PC-9 (cell line): ENCODE measurements at regions of chrX and their contacts with region 1.

Region 1: DNA sequence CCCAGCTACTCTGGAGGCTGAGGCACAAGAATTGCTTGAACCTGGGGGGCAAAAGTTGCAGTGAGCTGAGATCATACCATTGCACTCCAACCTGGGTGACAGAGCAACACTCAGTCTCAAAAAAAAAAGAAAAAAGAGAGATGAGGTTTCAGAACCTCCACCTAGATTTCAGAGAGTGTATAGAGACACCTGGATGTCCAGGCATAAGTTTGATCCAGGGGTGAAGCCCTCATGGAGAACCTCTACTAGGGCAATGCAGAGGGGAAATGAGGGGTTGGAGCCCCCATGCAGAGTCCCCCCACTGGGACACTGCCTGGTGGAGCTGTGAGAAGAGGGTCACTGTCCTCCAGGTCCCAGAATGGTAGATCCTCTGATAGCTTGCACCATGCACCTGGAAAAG is 92.8 kb upstream of the HSD17B10 start:
- DNase-seq: no peak
- H3K4me3 ChIP-seq: no peak overlapping the region
- H3K27ac ChIP-seq: no peak overlapping the region
- H3K4me1 ChIP-seq: no peaks in the 10 kb centered on the region
- H3K27me3 ChIP-seq: no peaks in the 10 kb centered on the region
- CTCF ChIP-seq: no peak

Region 2: DNA sequence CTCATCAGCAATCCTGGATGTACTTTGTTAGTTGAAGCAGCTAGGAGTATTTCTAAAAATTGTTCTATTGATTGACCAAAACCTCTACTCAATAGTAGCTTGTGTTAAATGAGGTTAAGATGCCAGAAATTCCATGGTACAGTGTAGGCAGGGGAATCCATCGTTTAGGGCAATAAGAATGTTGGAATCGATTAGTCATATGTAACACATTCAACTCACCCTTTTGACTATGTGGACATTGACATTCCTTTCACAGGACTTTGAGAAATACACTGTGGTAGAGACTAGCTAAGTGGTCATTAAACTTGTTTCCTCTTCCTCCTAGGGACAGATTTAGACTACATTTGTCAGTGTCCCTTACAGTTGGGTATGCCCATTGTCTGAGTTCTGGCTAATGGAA is 342.2 kb before region 1 on chrX:
- CTCF ChIA-PET with region 1: interaction called, 18 read pairs
- POLR2A ChIA-PET with region 1: no interaction called
- intact Hi-C with region 1: no loop called
- DNase-seq: no peak
- H3K4me3 ChIP-seq: no peak overlapping the region
- H3K27ac ChIP-seq: no peak overlapping the region
- H3K4me1 ChIP-seq: no peaks in the 10 kb centered on the region
- H3K27me3 ChIP-seq: no peaks in the 10 kb centered on the region
- CTCF ChIP-seq: no peak

Region 3: DNA sequence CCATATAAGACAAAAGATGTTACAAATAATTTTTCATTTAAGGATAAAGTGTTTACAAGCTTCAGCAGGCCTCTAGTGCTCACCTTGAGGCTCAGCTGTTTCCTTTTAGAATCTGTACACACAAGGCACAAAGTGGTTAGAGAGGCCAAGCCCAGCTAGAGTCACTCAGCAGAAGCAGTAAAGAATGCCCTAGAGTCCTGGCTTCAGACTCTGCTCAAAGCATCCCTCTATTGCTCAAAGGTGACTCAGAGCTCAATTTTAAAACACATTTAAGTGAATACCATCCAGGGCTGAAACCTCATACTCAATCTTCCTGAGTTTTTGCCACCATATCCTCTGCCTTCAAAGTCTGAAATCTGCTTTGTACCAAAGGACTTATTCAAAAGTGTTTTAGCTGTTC is 539.8 kb after region 1 on chrX:
- CTCF ChIA-PET with region 1: no interaction called
- POLR2A ChIA-PET with region 1: no interaction called
- intact Hi-C with region 1: no loop called
- DNase-seq: no peak
- H3K4me3 ChIP-seq: no peak overlapping the region
- H3K27ac ChIP-seq: no peak overlapping the region
- H3K4me1 ChIP-seq: no peaks in the 10 kb centered on the region
- H3K27me3 ChIP-seq: no peaks in the 10 kb centered on the region
- CTCF ChIP-seq: no peak